Activated B cell treated with CpG ODN at 0.5 μM for 24 hours (primary cell): ENCODE measurements at regions of chr13 and their contacts with region 1.

Region 1: GRCh38 chr13:50801087-50801931 is 42.2 kb downstream of the DLEU7 start:
- DNase-seq: peak; percentile 39
- ATAC-seq: peak; percentile 74
- H3K4me3 Mint-ChIP-seq: peak overlapping the region; percentile 64
- H3K27ac Mint-ChIP-seq: peak overlapping the region; percentile 95
- H3K4me1 Mint-ChIP-seq: peaks cover 40% of the 10 kb centered on the region
- H3K27me3 Mint-ChIP-seq: no peaks in the 10 kb centered on the region
- CTCF ChIP-seq: no peak

Region 2: GRCh38 chr13:49936085-49936940 is 865.0 kb before region 1 on chr13 and contains the start of gene SPRYD7:
- CTCF ChIA-PET with region 1: interaction called, 4 read pairs
- POLR2A ChIA-PET with region 1: interaction called, 3 read pairs
- intact Hi-C with region 1: loop called (anchors 5 kb)
- DNase-seq: peak; percentile 100
- ATAC-seq: peak; percentile 98
- H3K4me3 Mint-ChIP-seq: peak within 1 kb of the TSS; percentile 97
- H3K27ac Mint-ChIP-seq: peak within 1 kb of the TSS; percentile 91
- H3K4me1 Mint-ChIP-seq: peaks cover 32% of the 10 kb centered on the region
- H3K27me3 Mint-ChIP-seq: no peaks in the 10 kb centered on the region
- CTCF ChIP-seq: no peak
- total RNA-seq, gene SPRYD7: 3.7 and 4.5 TPM in 2 replicates

Region 3: GRCh38 chr13:50130123-50130946 is 671.0 kb before region 1 on chr13:
- CTCF ChIA-PET with region 1: interaction called, 15 read pairs
- POLR2A ChIA-PET with region 1: interaction called, 187 read pairs
- intact Hi-C with region 1: loop called (anchors 1 kb)
- DNase-seq: peak; percentile 54
- ATAC-seq: peak; percentile 36
- H3K4me3 Mint-ChIP-seq: peak overlapping the region; percentile 89
- H3K27ac Mint-ChIP-seq: peak overlapping the region; percentile 95
- H3K4me1 Mint-ChIP-seq: peaks cover 60% of the 10 kb centered on the region
- H3K27me3 Mint-ChIP-seq: peaks cover 16% of the 10 kb centered on the region
- CTCF ChIP-seq: no peak

Region 4: DNA sequence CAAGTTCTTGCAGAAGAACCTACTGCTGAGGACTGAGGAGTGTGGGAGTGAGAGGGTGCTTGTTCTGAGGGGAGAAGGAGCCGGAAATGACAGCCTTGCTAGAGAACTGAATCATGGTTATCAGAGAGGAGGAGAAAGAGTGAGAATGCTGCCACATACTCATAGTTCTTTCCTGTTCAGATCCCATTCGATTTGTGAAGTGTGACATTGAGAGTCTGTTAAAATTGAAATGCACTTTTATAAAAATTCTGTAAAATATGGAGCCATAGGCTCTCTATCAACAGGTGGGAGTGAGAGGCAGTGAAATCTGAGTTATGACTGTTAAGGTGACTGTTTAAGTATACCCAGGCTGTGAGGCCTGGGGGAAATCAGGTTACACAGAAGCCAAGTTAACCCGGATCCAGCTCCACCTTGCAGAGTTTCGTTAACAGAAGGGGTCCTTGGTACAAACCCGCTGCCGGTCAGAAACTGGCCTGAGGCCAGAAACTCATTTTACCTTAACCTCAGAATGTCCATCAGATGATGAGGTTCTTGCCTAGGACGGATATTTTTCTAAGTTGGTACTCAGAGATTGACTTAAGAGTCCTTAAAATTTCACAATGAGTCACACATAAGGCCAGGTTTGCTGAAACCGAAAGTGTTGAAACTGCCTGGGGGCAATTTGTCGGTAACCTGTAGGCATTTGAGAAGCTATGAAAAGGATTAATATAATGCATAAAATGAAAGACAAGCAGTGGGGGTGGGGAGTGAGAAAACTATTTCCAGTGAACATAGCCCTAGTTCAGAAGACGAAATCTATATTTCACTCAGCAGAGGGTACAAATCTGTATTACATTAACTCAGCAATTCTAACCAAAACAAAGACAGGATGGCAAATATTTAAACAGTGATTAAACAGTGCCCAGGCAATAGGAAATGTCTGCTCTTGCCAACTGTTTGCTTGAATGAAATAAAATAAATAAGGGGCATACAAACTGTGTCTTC is 435.6 kb before region 1 on chr13:
- CTCF ChIA-PET with region 1: interaction called, 7 read pairs
- POLR2A ChIA-PET with region 1: interaction called, 16 read pairs
- intact Hi-C with region 1: loop called (anchors 1 kb)
- DNase-seq: no peak
- ATAC-seq: peak; percentile 28
- H3K4me3 Mint-ChIP-seq: peak overlapping the region; percentile 63
- H3K27ac Mint-ChIP-seq: peak overlapping the region; percentile 86
- H3K4me1 Mint-ChIP-seq: peaks cover 57% of the 10 kb centered on the region
- H3K27me3 Mint-ChIP-seq: no peaks in the 10 kb centered on the region
- CTCF ChIP-seq: no peak

Region 5: DNA sequence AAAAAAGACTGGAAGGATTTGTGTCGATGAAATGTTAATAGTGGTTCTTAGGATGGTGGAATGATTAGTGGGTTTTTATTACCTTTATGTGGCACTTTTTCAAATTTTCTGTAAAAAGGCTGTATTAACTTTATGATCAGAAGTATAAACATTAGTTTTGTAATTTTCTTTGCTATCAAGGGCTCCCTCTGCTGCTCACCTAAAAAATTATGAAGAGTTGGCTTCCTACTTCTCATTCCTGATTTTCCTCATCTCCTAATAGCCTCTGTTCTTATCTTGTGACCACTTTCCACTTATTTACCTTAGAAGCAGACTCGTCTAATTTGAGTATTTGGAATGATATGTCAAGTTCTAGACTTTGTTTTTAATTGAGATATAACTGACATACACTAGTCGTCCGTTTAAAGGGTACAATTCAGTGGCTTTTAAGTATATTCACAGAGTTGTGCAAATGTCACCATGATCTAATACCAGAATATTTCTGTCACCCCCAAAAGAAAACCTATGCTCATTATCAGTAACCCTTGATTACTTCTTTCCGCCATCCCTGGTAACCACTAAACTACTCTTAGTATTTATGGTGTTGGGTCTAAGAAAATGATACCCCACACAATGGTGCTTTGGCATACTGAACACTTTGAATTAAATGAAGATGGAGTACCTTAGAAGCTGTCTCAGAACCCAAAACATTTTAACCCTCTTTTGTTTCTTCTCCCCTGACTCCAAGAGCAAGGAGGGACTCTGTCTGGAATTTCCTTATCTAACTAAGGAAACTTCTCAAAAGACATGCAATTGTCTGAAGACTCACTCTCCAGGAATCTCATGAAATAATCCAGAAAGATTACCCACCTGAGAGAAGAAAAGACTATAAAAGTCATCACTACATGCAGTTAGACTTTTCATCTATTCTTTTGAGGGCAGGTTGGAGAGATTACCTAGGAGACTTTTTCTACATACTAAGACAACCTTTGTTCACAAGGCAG is 269.1 kb before region 1 on chr13:
- CTCF ChIA-PET with region 1: interaction called, 6 read pairs
- POLR2A ChIA-PET with region 1: interaction called, 4 read pairs
- intact Hi-C with region 1: loop called (anchors 1 kb)
- DNase-seq: no peak
- ATAC-seq: no peak
- H3K4me3 Mint-ChIP-seq: no peak overlapping the region
- H3K27ac Mint-ChIP-seq: no peak overlapping the region
- H3K4me1 Mint-ChIP-seq: peaks cover 15% of the 10 kb centered on the region
- H3K27me3 Mint-ChIP-seq: no peaks in the 10 kb centered on the region
- CTCF ChIP-seq: no peak

Region 6: GRCh38 chr13:50635504-50635903 is 165.8 kb before region 1 on chr13:
- CTCF ChIA-PET with region 1: no interaction called
- POLR2A ChIA-PET with region 1: interaction called, 5 read pairs
- intact Hi-C with region 1: loop called (anchors 1 kb)
- DNase-seq: no peak
- ATAC-seq: peak; percentile 75
- H3K4me3 Mint-ChIP-seq: peak overlapping the region; percentile 61
- H3K27ac Mint-ChIP-seq: peak overlapping the region; percentile 96
- H3K4me1 Mint-ChIP-seq: peaks cover 42% of the 10 kb centered on the region
- H3K27me3 Mint-ChIP-seq: no peaks in the 10 kb centered on the region
- CTCF ChIP-seq: no peak

Region 7: GRCh38 chr13:50760751-50761150 is 40.6 kb before region 1 on chr13:
- CTCF ChIA-PET with region 1: interaction called, 17 read pairs
- POLR2A ChIA-PET with region 1: interaction called, 6 read pairs
- intact Hi-C with region 1: loop called (anchors 1 kb)
- DNase-seq: no peak
- ATAC-seq: no peak
- H3K4me3 Mint-ChIP-seq: no peak overlapping the region
- H3K27ac Mint-ChIP-seq: no peak overlapping the region
- H3K4me1 Mint-ChIP-seq: peaks cover 53% of the 10 kb centered on the region
- H3K27me3 Mint-ChIP-seq: no peaks in the 10 kb centered on the region
- CTCF ChIP-seq: no peak